CD4-positive, alpha-beta memory T cell (primary cell): ENCODE measurements at regions of chr1 and their contacts with region 1.

Region 1: DNA sequence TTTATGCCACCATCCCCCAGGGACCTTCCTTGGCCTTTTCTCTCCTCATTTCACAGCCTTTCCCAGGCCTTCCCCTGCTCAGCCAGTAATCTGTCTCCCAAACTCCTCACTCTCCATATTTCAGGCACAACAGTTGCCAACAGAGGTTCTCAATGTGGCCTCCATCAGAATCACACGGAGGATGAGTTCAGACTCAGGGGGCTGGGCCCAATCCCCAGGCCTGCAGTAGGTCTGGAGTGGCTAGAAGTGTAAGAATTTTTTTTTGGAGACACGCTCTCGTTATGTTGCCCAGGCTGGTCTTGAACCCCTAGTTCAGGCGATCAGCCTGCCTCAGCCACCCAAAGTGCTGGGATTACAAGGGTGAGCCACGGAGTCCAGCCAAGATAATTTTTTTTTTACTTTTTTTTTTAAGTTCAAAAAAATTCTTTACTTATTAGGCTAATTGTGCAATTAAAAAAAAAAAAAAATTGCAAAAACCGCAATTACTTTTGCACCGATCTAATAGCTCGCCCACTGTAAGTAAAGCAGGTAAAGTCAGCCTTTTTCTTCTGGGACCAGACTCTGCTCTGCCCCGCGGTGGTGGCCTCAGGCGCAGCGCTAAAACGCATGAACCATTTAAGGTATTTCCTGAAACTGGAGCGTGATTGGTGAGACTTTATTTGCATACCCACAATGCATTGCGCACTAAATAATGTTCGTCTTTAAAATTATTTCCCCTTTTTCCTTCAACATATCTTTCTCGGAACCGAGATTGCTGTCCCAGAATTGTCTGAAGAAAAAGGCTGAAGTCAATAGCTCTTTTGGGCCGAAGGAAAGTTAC is 18.7 kb downstream of the KIAA2013 start:
- DNase-seq: peak; percentile 94 to 96 (median 95)
- H3K4me3 ChIP-seq: peak overlapping the region in 1 of 2 donors; percentile 83
- H3K4me3 Mint-ChIP-seq: peak overlapping the region; percentile 92 to 100 (median 96)
- H3K27ac ChIP-seq: peak overlapping the region; percentile 97
- H3K27ac Mint-ChIP-seq: peak overlapping the region; percentile 99 to 100 (median 100)
- H3K4me1 ChIP-seq: peaks cover 28% of the 10 kb centered on the region
- H3K4me1 Mint-ChIP-seq: peaks cover 16 to 41% (median 25%) of the 10 kb centered on the region in 4 donors
- H3K27me3 ChIP-seq: peaks cover 5% of the 10 kb centered on the region
- H3K27me3 Mint-ChIP-seq: peaks cover 1 to 9% of the 10 kb centered on the region in 2 donors

Region 2: GRCh38 chr1:11059990-11060830 is 847.3 kb before region 1 on chr1 and contains the start of gene SRM:
- CTCF ChIA-PET with region 1: no interaction called
- POLR2A ChIA-PET with region 1: interaction called, 15 read pairs
- intact Hi-C with region 1: no loop called
- DNase-seq: peak; percentile 87 to 93 (median 90)
- H3K4me3 ChIP-seq: peak within 1 kb of the TSS; percentile 57 to 76
- H3K4me3 Mint-ChIP-seq: peak within 1 kb of the TSS; percentile 92 to 96 (median 94)
- H3K27ac ChIP-seq: peak within 1 kb of the TSS; percentile 65
- H3K27ac Mint-ChIP-seq: peak within 1 kb of the TSS; percentile 86 to 96 (median 93)
- H3K4me1 ChIP-seq: peaks cover 26% of the 10 kb centered on the region
- H3K4me1 Mint-ChIP-seq: peaks cover 15 to 42% (median 30%) of the 10 kb centered on the region in 4 donors
- H3K27me3 ChIP-seq: no peaks in the 10 kb centered on the region
- H3K27me3 Mint-ChIP-seq: no peaks in the 10 kb centered on the region
- total RNA-seq, gene SRM: 53.1 to 55.1 TPM

Region 3: GRCh38 chr1:11645670-11646265 is 261.7 kb before region 1 on chr1:
- CTCF ChIA-PET with region 1: no interaction called
- POLR2A ChIA-PET with region 1: interaction called, 15 read pairs
- intact Hi-C with region 1: no loop called
- DNase-seq: peak; percentile 71 to 75 (median 73)
- H3K4me3 ChIP-seq: no peak overlapping the region
- H3K4me3 Mint-ChIP-seq: no peak overlapping the region
- H3K27ac ChIP-seq: no peak overlapping the region
- H3K27ac Mint-ChIP-seq: no peak overlapping the region
- H3K4me1 ChIP-seq: peaks cover 15% of the 10 kb centered on the region
- H3K4me1 Mint-ChIP-seq: peaks cover 5 to 21% (median 12%) of the 10 kb centered on the region in 4 donors
- H3K27me3 ChIP-seq: no peaks in the 10 kb centered on the region
- H3K27me3 Mint-ChIP-seq: peaks cover 0 to 2% of the 10 kb centered on the region in 2 donors

Region 4: GRCh38 chr1:11719313-11720032 is 188.0 kb before region 1 on chr1:
- CTCF ChIA-PET with region 1: no interaction called
- POLR2A ChIA-PET with region 1: interaction called, 23 read pairs
- intact Hi-C with region 1: no loop called
- DNase-seq: peak; percentile 82 to 86 (median 84)
- H3K4me3 ChIP-seq: peak overlapping the region; percentile 33 to 51
- H3K4me3 Mint-ChIP-seq: peak overlapping the region; percentile 65 to 87 (median 81)
- H3K27ac ChIP-seq: peak overlapping the region; percentile 50
- H3K27ac Mint-ChIP-seq: peak overlapping the region; percentile 58 to 96 (median 91)
- H3K4me1 ChIP-seq: peaks cover 17% of the 10 kb centered on the region
- H3K4me1 Mint-ChIP-seq: peaks cover 7 to 17% (median 11%) of the 10 kb centered on the region in 4 donors
- H3K27me3 ChIP-seq: no peaks in the 10 kb centered on the region
- H3K27me3 Mint-ChIP-seq: no peaks in the 10 kb centered on the region

Region 5: GRCh38 chr1:11838349-11839272 is 68.9 kb before region 1 on chr1:
- CTCF ChIA-PET with region 1: interaction called, 11 read pairs
- POLR2A ChIA-PET with region 1: interaction called, 37 read pairs
- intact Hi-C with region 1: loop called (anchors 1 kb)
- DNase-seq: peak; percentile 65 to 74 (median 72)
- H3K4me3 ChIP-seq: no peak overlapping the region
- H3K4me3 Mint-ChIP-seq: no peak overlapping the region
- H3K27ac ChIP-seq: no peak overlapping the region
- H3K27ac Mint-ChIP-seq: peak overlapping the region in 1 of 7 donors; percentile 24
- H3K4me1 ChIP-seq: peaks cover 3% of the 10 kb centered on the region
- H3K4me1 Mint-ChIP-seq: peaks cover 2 to 6% (median 4%) of the 10 kb centered on the region in 4 donors
- H3K27me3 ChIP-seq: no peaks in the 10 kb centered on the region
- H3K27me3 Mint-ChIP-seq: no peaks in the 10 kb centered on the region

Region 6: GRCh38 chr1:11934302-11935056 is 27.0 kb after region 1 on chr1 and contains the start of gene PLOD1:
- CTCF ChIA-PET with region 1: no interaction called
- POLR2A ChIA-PET with region 1: interaction called, 116 read pairs
- intact Hi-C with region 1: loop called (anchors 1 kb)
- DNase-seq: peak; percentile 68 to 90 (median 71)
- H3K4me3 ChIP-seq: peak within 1 kb of the TSS; percentile 33 to 67
- H3K4me3 Mint-ChIP-seq: peak within 1 kb of the TSS; percentile 82 to 90 (median 84)
- H3K27ac ChIP-seq: peak within 1 kb of the TSS; percentile 47
- H3K27ac Mint-ChIP-seq: peak within 1 kb of the TSS in 5 of 7 donors; percentile 30 to 82 (median 53)
- H3K4me1 ChIP-seq: peaks cover 11% of the 10 kb centered on the region
- H3K4me1 Mint-ChIP-seq: peaks cover 0 to 5% (median 0%) of the 10 kb centered on the region in 4 donors
- H3K27me3 ChIP-seq: no peaks in the 10 kb centered on the region
- H3K27me3 Mint-ChIP-seq: no peaks in the 10 kb centered on the region
- total RNA-seq, gene PLOD1: 2.9 to 3.6 TPM

Region 7: DNA sequence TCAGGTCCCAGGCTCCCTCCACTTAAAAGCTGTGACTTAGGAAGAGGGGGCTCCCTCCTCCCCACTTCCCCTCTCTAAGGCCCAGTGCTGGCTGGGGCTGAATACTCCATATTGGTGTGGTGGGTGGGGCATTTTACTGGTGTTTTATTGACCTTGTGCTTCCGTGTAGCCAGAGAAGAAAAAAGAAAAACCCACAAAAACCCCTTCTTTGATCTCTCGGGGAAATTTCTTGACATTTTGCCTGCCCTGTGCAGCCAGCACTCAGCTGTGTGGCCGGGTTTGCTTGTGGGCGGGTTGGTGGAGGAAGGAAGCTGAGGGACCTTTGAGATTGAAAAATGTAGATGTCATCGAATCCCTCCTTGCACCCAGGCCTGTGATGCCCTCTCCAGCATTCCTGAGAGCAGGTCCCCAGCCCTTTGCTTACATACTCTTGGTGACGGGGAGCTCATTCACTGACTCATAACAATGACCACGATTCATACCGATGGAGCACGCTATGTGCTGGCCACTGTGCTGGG is 180.4 kb after region 1 on chr1:
- CTCF ChIA-PET with region 1: no interaction called
- POLR2A ChIA-PET with region 1: interaction called, 16 read pairs
- intact Hi-C with region 1: no loop called
- DNase-seq: peak; percentile 56 to 68 (median 60)
- H3K4me3 ChIP-seq: peak overlapping the region; percentile 12 to 47
- H3K4me3 Mint-ChIP-seq: peak overlapping the region; percentile 60 to 84 (median 78)
- H3K27ac ChIP-seq: peak overlapping the region; percentile 50
- H3K27ac Mint-ChIP-seq: peak overlapping the region; percentile 77 to 95 (median 90)
- H3K4me1 ChIP-seq: peaks cover 47% of the 10 kb centered on the region
- H3K4me1 Mint-ChIP-seq: peaks cover 39 to 54% (median 44%) of the 10 kb centered on the region in 4 donors
- H3K27me3 ChIP-seq: no peaks in the 10 kb centered on the region
- H3K27me3 Mint-ChIP-seq: no peaks in the 10 kb centered on the region